CD4-positive, alpha-beta memory T cell (primary cell): ENCODE measurements at regions of chr14 and their contacts with region 1.

Region 1: DNA sequence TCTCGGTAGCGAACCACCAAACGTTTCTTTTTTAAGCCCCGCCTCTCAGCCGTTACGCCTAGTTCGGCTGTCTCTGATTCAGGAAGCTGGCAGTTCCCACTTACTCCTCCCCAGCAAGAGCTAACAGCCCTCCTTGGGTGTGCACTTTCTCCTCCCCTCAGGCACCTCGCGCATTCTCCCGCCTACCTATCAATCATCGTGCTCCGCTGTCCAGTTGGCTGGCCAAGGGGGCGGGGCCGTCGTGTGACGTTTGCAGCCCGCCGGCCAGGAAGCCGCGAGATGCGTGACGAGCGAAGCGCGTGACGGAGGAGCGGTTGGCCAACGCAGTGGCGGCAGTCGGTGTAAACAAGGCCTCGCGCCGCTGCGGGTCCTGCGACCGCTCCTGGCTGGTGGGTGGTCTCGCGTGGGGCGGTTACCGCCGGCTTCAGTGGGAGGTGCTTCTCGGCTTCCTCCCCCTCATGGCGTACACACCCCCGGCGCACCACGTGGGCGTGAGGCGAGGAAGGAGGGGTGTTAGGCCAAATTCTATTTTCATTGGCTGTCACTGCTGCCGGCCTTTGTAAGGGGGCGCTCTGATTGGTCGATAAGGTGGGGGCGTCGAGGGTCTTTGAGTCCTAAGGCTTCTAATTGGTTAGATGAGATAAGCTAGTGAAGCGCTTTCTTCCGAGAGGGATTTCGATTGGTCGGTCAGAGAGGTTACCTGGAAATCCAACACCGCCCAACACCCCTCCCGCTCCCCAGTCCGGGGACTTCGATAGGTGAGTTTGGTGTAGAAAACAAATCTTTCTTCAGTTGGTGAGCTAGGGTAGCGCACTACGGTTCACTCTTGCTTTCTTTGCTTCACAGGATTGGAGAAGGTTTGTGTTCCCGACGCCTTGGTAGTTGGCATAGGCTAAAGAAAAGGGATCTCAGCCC is at the starts of genes DCAF11 and NRL:
- DNase-seq: peak; percentile 100
- H3K4me3 ChIP-seq: peak within 1 kb of the TSS; percentile 97 to 98
- H3K4me3 Mint-ChIP-seq: peak within 1 kb of the TSS; percentile 95 to 99 (median 98)
- H3K27ac ChIP-seq: peak within 1 kb of the TSS; percentile 98
- H3K27ac Mint-ChIP-seq: peak within 1 kb of the TSS; percentile 98 to 100 (median 99)
- H3K4me1 ChIP-seq: peaks cover 29% of the 10 kb centered on the region
- H3K4me1 Mint-ChIP-seq: peaks cover 19 to 44% (median 30%) of the 10 kb centered on the region in 4 donors
- H3K27me3 ChIP-seq: no peaks in the 10 kb centered on the region
- H3K27me3 Mint-ChIP-seq: no peaks in the 10 kb centered on the region
- total RNA-seq, gene DCAF11: 71.5 to 75.8 TPM
- total RNA-seq, gene NRL: 2.9 to 4.5 TPM

Region 2: GRCh38 chr14:23469127-23469905 is 645.5 kb before region 1 on chr14 and contains the start of gene NGDN:
- CTCF ChIA-PET with region 1: no interaction called
- POLR2A ChIA-PET with region 1: no interaction called
- intact Hi-C with region 1: loop called (anchors 10 kb)
- DNase-seq: peak; percentile 93 to 99 (median 97)
- H3K4me3 ChIP-seq: peak within 1 kb of the TSS; percentile 75 to 78
- H3K4me3 Mint-ChIP-seq: peak within 1 kb of the TSS in 1 of 8 donors; percentile 35
- H3K27ac ChIP-seq: peak within 1 kb of the TSS; percentile 89
- H3K27ac Mint-ChIP-seq: peak within 1 kb of the TSS in 3 of 7 donors; percentile 36 to 78 (median 43)
- H3K4me1 ChIP-seq: peaks cover 17% of the 10 kb centered on the region
- H3K4me1 Mint-ChIP-seq: peaks cover 0 to 7% (median 6%) of the 10 kb centered on the region in 4 donors
- H3K27me3 ChIP-seq: no peaks in the 10 kb centered on the region
- H3K27me3 Mint-ChIP-seq: no peaks in the 10 kb centered on the region
- total RNA-seq, gene NGDN: 60.7 to 63.5 TPM

Region 3: DNA sequence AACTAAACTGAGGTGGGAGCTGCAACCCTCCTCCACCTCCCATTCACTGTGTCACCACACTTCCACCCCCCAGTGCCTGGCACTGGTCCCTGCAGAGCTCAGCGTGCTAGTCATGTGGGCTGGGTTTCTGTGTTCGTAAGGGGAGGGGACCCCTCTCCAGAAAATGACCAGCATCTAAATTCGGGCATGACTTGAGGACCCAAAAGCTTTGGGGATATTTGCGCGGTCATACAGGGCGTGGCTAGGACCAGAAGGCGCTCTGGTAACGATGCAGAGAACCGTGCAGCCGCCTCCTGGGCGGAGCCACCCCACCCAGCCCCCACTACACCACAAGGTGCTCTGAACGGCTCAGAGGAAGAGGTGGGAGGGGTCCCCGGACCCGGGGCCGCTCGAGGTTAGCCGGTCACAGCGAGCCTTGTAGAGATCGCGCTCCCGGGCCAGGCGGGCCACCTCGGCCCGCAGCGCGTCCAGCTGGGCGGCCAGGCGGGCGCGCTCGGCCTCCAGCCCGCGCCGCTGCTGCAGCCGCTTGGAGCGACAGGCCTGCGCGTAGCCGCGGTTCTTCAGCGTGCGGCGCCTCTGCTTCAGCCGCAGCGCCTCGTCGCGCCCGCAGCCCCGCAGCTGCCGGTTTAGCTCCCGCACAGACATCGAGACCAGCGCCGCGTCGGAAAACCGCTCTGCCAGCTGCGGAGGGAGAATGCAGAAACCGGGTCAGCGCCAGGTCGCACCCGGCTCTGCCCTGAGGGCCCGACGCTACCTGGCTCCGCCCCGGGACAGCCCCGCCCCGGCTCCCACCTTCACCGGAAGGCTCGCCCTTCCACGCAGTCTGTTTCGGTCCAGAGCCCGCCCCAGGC is 33.7 kb before region 1 on chr14:
- CTCF ChIA-PET with region 1: interaction called, 85 read pairs
- POLR2A ChIA-PET with region 1: interaction called, 51 read pairs
- intact Hi-C with region 1: no loop called
- DNase-seq: peak; percentile 64 to 77 (median 67)
- H3K4me3 ChIP-seq: peak overlapping the region; percentile 39 to 60
- H3K4me3 Mint-ChIP-seq: peak overlapping the region; percentile 81 to 90 (median 87)
- H3K27ac ChIP-seq: peak overlapping the region; percentile 50
- H3K27ac Mint-ChIP-seq: peak overlapping the region; percentile 64 to 92 (median 88)
- H3K4me1 ChIP-seq: peaks cover 14% of the 10 kb centered on the region
- H3K4me1 Mint-ChIP-seq: peaks cover 10 to 27% (median 15%) of the 10 kb centered on the region in 4 donors
- H3K27me3 ChIP-seq: no peaks in the 10 kb centered on the region
- H3K27me3 Mint-ChIP-seq: no peaks in the 10 kb centered on the region

Region 4: GRCh38 chr14:24141097-24141880 is 26.5 kb after region 1 on chr14 and contains the start of gene EMC9:
- CTCF ChIA-PET with region 1: interaction called, 36 read pairs
- POLR2A ChIA-PET with region 1: interaction called, 347 read pairs
- intact Hi-C with region 1: loop called (anchors 1 kb)
- DNase-seq: peak; percentile 98 to 100 (median 99)
- H3K4me3 ChIP-seq: peak within 1 kb of the TSS; percentile 83 to 91
- H3K4me3 Mint-ChIP-seq: peak within 1 kb of the TSS; percentile 85 to 97 (median 94)
- H3K27ac ChIP-seq: peak within 1 kb of the TSS; percentile 77
- H3K27ac Mint-ChIP-seq: peak within 1 kb of the TSS; percentile 76 to 95 (median 94)
- H3K4me1 ChIP-seq: peaks cover 74% of the 10 kb centered on the region
- H3K4me1 Mint-ChIP-seq: peaks cover 38 to 94% (median 61%) of the 10 kb centered on the region in 4 donors
- H3K27me3 ChIP-seq: no peaks in the 10 kb centered on the region
- H3K27me3 Mint-ChIP-seq: no peaks in the 10 kb centered on the region
- total RNA-seq, gene EMC9: 33.0 to 33.9 TPM

Region 5: GRCh38 chr14:24188251-24189058 is 73.7 kb after region 1 on chr14 and contains the start of gene IPO4:
- CTCF ChIA-PET with region 1: interaction called, 3 read pairs
- POLR2A ChIA-PET with region 1: interaction called, 25 read pairs
- intact Hi-C with region 1: loop called (anchors 1 kb)
- DNase-seq: peak; percentile 92 to 98 (median 95)
- H3K4me3 ChIP-seq: peak within 1 kb of the TSS; percentile 31 to 90
- H3K4me3 Mint-ChIP-seq: peak within 1 kb of the TSS; percentile 90 to 96 (median 93)
- H3K27ac ChIP-seq: peak within 1 kb of the TSS; percentile 80
- H3K27ac Mint-ChIP-seq: peak within 1 kb of the TSS; percentile 93 to 96 (median 96)
- H3K4me1 ChIP-seq: peaks cover 23% of the 10 kb centered on the region
- H3K4me1 Mint-ChIP-seq: peaks cover 20 to 56% (median 36%) of the 10 kb centered on the region in 4 donors
- H3K27me3 ChIP-seq: no peaks in the 10 kb centered on the region
- H3K27me3 Mint-ChIP-seq: no peaks in the 10 kb centered on the region
- total RNA-seq, gene IPO4: 22.4 to 30.2 TPM

Region 6: DNA sequence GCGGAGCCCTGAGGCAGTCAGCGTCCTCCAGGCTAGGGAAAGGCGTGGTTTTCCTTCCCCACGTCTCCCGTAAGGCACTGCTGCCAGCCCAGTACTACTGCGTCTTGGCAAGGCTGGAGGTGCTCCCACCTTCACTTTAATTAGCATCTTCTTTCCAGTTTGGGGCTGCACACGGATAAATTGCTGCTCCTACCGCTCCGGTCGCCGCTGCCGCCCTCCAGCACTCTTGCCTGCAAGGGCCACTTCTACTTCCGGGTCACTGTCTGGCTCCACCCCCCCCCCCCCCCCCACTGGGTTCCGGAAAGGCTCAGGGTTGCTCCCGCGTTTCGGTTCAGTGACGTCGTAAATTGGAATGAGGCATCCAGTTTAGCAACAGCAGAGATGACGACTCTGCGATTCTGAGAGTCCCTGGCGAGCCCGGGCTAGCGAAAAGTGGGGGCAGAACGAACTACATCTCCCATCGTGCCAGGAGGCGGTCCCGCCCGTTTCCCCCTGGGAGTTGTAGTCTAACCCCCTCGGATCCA is 117.4 kb after region 1 on chr14 and contains the start of gene NEDD8:
- CTCF ChIA-PET with region 1: no interaction called
- POLR2A ChIA-PET with region 1: interaction called, 3 read pairs
- intact Hi-C with region 1: loop called (anchors 1 kb)
- DNase-seq: peak; percentile 89 to 96 (median 89)
- H3K4me3 ChIP-seq: peak within 1 kb of the TSS; percentile 100
- H3K4me3 Mint-ChIP-seq: peak within 1 kb of the TSS; percentile 97 to 99 (median 98)
- H3K27ac ChIP-seq: peak within 1 kb of the TSS; percentile 88
- H3K27ac Mint-ChIP-seq: peak within 1 kb of the TSS; percentile 95 to 99 (median 97)
- H3K4me1 ChIP-seq: peaks cover 41% of the 10 kb centered on the region
- H3K4me1 Mint-ChIP-seq: peaks cover 41 to 68% (median 54%) of the 10 kb centered on the region in 4 donors
- H3K27me3 ChIP-seq: no peaks in the 10 kb centered on the region
- H3K27me3 Mint-ChIP-seq: no peaks in the 10 kb centered on the region
- total RNA-seq, gene NEDD8: 116 to 127 TPM

Region 7: DNA sequence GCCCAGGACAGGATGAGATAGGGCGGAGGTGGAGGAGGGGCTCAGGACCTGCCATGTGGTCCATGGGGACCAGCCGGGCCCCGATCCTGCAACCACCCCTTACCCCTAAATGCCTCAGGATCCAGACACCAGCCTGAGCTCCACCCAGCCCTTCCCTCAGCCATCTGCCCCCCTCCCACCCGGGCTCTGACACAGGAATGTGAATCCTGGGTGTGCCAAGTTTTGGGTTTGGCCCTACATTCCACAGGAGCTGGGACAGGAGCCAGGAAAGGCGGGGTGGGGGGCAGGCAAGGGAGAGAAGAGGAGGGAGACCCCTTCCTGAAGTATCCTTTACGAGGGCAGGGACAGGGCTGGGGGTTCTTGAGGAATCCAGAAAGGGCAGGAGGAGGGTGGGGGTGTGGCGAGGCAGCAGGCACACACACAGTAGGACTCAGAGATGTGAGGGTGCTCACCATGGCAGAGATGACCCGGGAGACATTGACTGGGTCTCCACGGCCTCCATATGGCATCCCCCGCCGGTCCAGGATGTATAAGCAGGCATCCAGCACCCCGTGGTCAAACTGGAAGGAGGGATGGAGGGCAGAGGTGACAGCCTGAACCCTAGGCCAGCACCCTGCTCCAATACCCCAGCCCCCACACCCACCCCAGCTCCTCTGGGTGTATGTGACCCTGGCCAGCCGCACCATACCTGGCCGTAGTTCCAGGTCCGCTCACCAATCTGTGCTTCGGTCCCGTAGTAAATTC is 144.6 kb after region 1 on chr14:
- CTCF ChIA-PET with region 1: no interaction called
- POLR2A ChIA-PET with region 1: no interaction called
- intact Hi-C with region 1: no loop called
- DNase-seq: no peak
- H3K4me3 ChIP-seq: no peak overlapping the region
- H3K4me3 Mint-ChIP-seq: no peak overlapping the region
- H3K27ac ChIP-seq: no peak overlapping the region
- H3K27ac Mint-ChIP-seq: peak overlapping the region in 1 of 7 donors; percentile 52
- H3K4me1 ChIP-seq: no peaks in the 10 kb centered on the region
- H3K4me1 Mint-ChIP-seq: no peaks in the 10 kb centered on the region
- H3K27me3 ChIP-seq: no peaks in the 10 kb centered on the region
- H3K27me3 Mint-ChIP-seq: no peaks in the 10 kb centered on the region

Region 8: GRCh38 chr14:24310646-24311604 is 196.1 kb after region 1 on chr14 and contains the start of gene LTB4R:
- CTCF ChIA-PET with region 1: interaction called, 5 read pairs
- POLR2A ChIA-PET with region 1: interaction called, 27 read pairs
- intact Hi-C with region 1: no loop called
- DNase-seq: peak; percentile 73 to 79 (median 77)
- H3K4me3 ChIP-seq: peak within 1 kb of the TSS; percentile 55 to 58
- H3K4me3 Mint-ChIP-seq: peak within 1 kb of the TSS; percentile 83 to 94 (median 88)
- H3K27ac ChIP-seq: peak within 1 kb of the TSS; percentile 72
- H3K27ac Mint-ChIP-seq: peak within 1 kb of the TSS; percentile 90 to 97 (median 95)
- H3K4me1 ChIP-seq: peaks cover 71% of the 10 kb centered on the region
- H3K4me1 Mint-ChIP-seq: peaks cover 58 to 89% (median 72%) of the 10 kb centered on the region in 4 donors
- H3K27me3 ChIP-seq: no peaks in the 10 kb centered on the region
- H3K27me3 Mint-ChIP-seq: no peaks in the 10 kb centered on the region
- total RNA-seq, gene LTB4R: 19.5 to 20.0 TPM